ENCODE measurements at regions of chr1 and their contacts with region 1.

Region 1: GRCh38 chr1:175015243-175015642 is 8.0 kb downstream of the MRPS14 start:
- DNase-seq: no peak
- H3K4me3 Mint-ChIP-seq: no peak overlapping the region
- H3K27ac Mint-ChIP-seq: no peak overlapping the region
- H3K4me1 Mint-ChIP-seq: peaks cover 6% of the 10 kb centered on the region
- H3K27me3 Mint-ChIP-seq: no peaks in the 10 kb centered on the region
- CTCF ChIP-seq: no peak

Region 2: DNA sequence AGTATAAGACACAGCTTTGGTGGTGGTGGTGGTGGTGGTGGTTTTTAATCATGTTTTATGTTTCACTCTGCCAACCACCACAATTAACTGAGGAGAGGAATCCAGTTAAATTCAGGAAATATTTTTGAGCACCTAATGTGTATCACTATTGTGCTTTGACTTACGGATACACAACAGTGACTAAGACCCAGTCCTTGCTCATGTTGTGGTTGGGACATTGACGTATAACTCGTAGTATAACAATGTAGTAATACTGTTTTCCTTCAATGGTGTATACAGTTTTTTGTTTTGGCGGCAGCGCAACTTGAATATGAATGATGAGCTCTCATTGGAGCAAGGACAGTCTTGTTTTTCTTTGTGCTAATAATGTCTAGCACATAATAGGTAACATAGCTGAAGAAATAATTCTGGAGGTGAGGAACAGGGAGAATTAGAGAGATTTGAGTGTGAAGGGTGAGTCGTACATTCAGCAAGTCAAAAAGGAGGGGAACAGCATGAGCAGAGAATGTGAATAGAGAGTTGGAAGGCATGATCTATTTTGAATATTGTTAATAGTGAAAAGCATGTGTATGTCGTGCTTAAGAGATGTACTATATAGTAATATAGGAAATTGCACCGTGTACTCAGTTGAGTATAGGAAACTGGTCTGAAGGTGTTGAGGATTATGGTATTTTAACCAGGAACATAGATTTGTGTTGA is 10.0 kb before region 1 on chr1:
- CTCF ChIA-PET with region 1: interaction called, 12 read pairs
- POLR2A ChIA-PET with region 1: interaction called, 331 read pairs
- intact Hi-C with region 1: no loop called
- DNase-seq: no peak
- H3K4me3 Mint-ChIP-seq: no peak overlapping the region
- H3K27ac Mint-ChIP-seq: peak overlapping the region; percentile 8
- H3K4me1 Mint-ChIP-seq: peaks cover 34% of the 10 kb centered on the region
- H3K27me3 Mint-ChIP-seq: no peaks in the 10 kb centered on the region
- CTCF ChIP-seq: no peak

Region 3: DNA sequence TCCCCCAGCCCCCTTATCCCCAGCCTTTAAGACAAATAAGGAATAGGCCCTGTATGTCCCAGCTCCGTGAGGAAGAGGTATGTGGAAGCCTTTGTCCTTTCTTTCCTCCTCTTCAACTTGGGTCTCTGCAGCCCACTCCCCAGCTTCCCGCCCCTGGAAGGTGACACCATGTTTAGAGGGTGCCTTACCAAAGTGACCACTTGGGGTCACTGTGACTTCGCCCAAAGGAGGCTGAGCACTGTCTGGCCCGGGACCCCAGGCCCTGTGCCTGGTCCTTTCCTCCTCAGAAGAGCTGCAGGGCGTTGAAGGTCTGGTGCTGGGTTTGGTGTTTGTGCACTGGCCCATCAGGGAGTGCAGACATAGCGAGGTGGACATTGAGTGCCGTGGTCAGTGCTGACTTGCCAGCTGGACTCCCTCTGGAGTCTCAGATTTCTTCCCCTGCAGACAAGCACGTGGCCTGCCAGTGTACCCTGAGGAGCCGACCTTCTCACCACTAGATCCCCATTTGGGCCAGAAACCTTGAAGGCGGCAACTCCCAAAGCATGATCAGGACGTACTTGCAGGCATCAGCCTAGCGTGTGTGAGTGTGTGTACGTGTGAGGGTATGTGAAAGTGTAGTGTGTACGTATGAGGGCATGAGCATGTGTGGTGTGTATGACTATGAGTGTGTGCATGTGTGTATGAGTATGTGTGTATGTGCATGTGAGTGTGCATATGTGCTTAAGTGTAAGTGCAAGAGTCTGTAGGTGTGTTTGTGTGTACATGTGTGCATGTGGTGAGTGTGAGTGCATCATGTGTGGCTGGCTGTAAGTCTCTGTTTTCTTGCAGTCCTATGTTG is 358.8 kb after region 1 on chr1:
- CTCF ChIA-PET with region 1: no interaction called
- POLR2A ChIA-PET with region 1: no interaction called
- intact Hi-C with region 1: no loop called
- DNase-seq: peak; percentile 47
- H3K4me3 Mint-ChIP-seq: no peak overlapping the region
- H3K27ac Mint-ChIP-seq: no peak overlapping the region
- H3K4me1 Mint-ChIP-seq: no peaks in the 10 kb centered on the region
- H3K27me3 Mint-ChIP-seq: peaks cover 48% of the 10 kb centered on the region
- CTCF ChIP-seq: peak; percentile 92

Measured in MCF 10A (cell line).